ENCODE measurements at regions of chr16 and their contacts with region 1.

Region 1: DNA sequence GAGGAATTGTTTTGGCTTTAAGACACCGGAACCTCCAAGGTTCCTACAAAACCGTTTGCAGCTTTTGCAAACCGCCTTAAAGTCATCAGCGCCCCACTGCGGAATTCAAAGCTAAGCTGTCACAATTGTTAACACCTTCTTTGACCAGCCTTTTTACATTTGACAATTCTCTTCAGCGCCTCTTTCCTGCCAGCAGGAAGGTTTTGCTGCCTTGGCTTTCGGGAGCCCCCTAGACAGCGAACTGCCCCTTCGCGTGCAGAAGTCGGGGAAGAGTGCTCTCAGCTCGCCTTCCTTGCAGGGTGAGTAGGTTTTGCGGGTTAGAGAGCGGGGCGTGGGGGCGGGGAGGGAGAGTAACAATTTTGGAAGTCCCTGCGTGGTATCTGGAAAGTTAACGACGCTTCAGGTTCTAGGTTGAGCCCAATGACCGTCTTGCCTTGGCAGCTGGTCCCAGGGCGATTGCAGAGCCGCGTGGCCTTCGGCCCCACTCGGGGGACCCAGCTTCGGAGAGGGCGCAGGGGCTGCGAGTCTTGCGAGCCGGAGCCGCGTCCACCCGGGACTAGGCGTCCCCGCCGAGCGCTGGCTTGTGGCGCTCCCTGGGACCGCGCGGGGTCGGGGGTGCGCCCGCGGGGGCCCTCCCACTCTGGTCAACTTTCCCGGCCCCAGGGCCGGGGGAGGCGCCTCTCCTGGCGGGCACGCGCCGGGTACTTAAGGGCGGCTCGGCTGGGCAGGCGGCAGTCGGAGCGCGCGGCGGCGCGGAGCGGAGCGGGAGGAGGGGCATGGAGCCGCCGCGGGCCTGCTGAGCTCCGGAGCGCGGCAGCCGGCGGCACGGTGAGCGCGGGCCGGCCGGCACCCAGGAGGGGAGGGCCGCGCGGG is at the start of gene HAS3:
- DNase-seq: peak; percentile 69
- ATAC-seq: peak; percentile 72
- H3K4me3 ChIP-seq: peak within 1 kb of the TSS; percentile 81 to 90
- H3K27ac ChIP-seq: peak within 1 kb of the TSS; percentile 74
- H3K4me1 ChIP-seq: peaks cover 24 to 66% of the 10 kb centered on the region in 2 experiments
- H3K27me3 ChIP-seq: no peaks in the 10 kb centered on the region
- CTCF ChIP-seq: peak; percentile 35 to 88 (median 59); a peak in 5 of 6 replicates
- POLR2A ChIP-seq: no peak
- RAD21 ChIP-seq: peak; percentile 96
- total RNA-seq, gene HAS3: 140 TPM

Region 2: DNA sequence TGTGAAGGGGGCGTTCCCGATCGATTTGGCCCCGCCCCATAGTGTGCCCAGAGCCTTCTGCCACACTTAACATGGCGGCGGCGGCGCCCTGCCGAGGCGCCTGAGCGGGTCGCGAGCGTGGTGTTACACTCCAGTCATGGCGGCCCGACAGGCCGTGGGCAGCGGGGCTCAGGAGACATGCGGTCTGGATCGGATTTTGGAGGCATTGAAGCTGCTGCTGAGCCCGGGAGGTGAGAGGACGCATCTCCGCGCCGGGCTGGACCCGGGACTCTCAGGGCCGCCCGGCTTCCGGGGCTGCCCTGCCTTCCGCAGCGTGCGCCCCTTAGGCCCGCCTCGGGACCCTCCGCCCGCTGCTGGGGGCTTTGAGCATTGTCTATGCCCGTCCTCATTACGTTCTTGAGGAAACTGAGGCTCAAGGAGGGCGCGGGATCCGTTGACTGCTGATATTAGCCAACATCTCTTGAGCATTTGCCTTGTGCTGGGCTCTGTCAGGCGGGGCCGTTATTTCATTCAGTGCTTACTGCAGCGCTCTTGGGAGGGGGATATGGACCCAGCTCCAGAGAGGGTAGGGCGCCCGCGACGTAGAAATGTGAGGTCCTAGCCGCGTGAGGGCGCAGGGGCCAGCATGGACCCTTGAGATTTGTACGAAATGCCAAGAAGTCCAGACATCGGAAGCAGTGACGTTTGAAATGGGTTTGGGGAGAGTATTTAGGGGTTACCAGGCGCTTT is 262.1 kb before region 1 on chr16 and contains the start of gene TANGO6:
- CTCF ChIA-PET with region 1: interaction called, 14 read pairs
- POLR2A ChIA-PET with region 1: no interaction called
- RAD21 ChIA-PET with region 1: no interaction called
- intact Hi-C with region 1: loop called (anchors 5 kb)
- DNase-seq: peak; percentile 47
- ATAC-seq: peak; percentile 87
- H3K4me3 ChIP-seq: peak within 1 kb of the TSS; percentile 88 to 97
- H3K27ac ChIP-seq: peak within 1 kb of the TSS; percentile 67
- H3K4me1 ChIP-seq: peaks cover 2 to 12% of the 10 kb centered on the region in 2 experiments; a peak in 3 of 4 replicates
- H3K27me3 ChIP-seq: no peaks in the 10 kb centered on the region
- CTCF ChIP-seq: peak; percentile 18 to 39 (median 35); a peak in 4 of 6 replicates
- POLR2A ChIP-seq: peak; percentile 94
- RAD21 ChIP-seq: peak; percentile 38; the same call in 1 of the 2 replicates
- total RNA-seq, gene TANGO6: 16.4 TPM

Region 3: DNA sequence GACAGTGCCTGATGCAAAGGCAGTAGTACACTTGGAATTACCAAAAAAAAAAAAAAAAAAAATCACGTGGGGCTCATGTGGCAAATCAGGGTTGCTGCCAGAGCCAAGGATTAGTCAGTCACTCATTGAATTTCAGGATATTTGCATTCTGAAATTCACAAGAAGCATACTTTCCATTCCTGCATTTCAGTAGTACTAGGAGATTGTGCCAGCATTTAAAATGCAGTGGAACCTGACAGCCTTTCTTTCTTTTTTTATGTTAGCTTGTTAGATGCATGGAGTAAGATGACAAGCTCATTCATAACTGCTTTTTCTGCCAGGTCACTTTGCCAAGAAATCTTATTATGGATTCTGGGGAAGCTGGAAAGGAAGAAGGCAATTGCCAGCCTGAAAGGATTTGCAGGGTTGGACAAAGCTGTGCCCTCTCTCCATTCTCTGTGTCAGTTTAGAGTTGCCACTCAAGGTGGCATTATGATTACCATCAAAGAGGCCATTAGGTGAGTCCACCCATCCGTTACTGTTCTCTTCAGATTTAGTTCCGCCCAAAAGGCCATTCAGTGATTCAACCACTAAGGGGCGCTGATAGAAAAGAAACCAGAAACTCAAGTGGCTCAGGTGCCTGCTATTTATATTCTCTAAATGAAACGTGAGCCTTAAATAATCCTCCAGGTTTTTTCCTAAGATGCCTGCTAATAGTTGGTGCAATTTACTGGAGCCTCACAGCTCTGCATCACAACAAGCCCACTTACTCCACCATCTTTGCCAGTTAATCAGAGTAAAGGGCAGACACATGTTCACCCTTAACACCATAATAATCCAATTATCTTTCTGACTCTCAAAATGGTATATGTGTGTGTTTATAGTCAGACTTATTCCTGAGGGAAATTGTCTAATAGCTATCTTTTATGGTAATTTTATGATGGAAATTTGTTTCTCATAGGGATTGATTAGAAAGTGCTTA is 203.4 kb before region 1 on chr16:
- CTCF ChIA-PET with region 1: interaction called, 9 read pairs
- POLR2A ChIA-PET with region 1: interaction called, 4 read pairs
- RAD21 ChIA-PET with region 1: interaction called in 1 of 2 experiments, 5 read pairs
- intact Hi-C with region 1: loop called (anchors 1 kb)
- DNase-seq: peak; percentile 72
- ATAC-seq: peak; percentile 90
- H3K4me3 ChIP-seq: no peak overlapping the region
- H3K27ac ChIP-seq: no peak overlapping the region
- H3K4me1 ChIP-seq: peaks cover 0 to 13% of the 10 kb centered on the region in 2 experiments; a peak in 2 of 4 replicates
- H3K27me3 ChIP-seq: no peaks in the 10 kb centered on the region
- CTCF ChIP-seq: peak; percentile 85 to 92 (median 90)
- POLR2A ChIP-seq: no peak
- RAD21 ChIP-seq: peak; percentile 98

Region 4: DNA sequence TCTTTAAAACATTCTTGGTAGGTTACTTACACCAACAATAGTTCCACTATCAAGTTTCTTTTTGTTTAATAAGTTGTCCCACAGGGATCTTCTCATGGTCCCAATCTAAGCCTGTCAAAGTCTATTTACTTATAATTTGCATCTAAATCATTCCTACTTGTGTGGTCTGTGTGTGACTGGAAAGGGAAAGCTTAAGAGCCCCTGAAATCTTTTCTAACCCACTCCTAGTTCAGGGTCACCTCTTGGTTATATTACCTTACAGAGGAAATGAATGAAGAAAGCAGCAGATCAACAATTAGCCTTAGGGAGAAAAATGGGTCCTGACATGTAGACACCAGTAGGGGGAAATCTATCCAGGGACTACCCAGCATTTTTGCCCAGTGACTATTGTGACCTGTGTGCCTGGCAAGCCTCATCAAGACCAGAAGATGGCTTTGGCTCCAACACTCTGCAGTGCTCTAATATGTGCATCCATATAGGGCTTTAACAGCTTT is 110.7 kb before region 1 on chr16:
- CTCF ChIA-PET with region 1: interaction called, 5 read pairs
- POLR2A ChIA-PET with region 1: interaction called, 3 read pairs
- RAD21 ChIA-PET with region 1: no interaction called
- intact Hi-C with region 1: loop called (anchors 2 kb)
- DNase-seq: peak; percentile 80
- ATAC-seq: peak; percentile 87
- H3K4me3 ChIP-seq: no peak overlapping the region
- H3K27ac ChIP-seq: peak overlapping the region; percentile 68
- H3K4me1 ChIP-seq: peaks cover 43 to 86% of the 10 kb centered on the region in 2 experiments
- H3K27me3 ChIP-seq: no peaks in the 10 kb centered on the region
- CTCF ChIP-seq: peak; percentile 75 to 86 (median 78)
- POLR2A ChIP-seq: no peak
- RAD21 ChIP-seq: peak; percentile 91

Region 5: GRCh38 chr16:69073161-69073669 is 32.5 kb before region 1 on chr16:
- CTCF ChIA-PET with region 1: interaction called, 4 read pairs
- POLR2A ChIA-PET with region 1: interaction called, 21 read pairs
- RAD21 ChIA-PET with region 1: no interaction called
- intact Hi-C with region 1: no loop called
- DNase-seq: peak; percentile 93
- ATAC-seq: peak; percentile 71
- H3K4me3 ChIP-seq: peak overlapping the region in 1 of 2 experiments; percentile 22; a peak in 3 of 4 replicates
- H3K27ac ChIP-seq: peak overlapping the region; percentile 79
- H3K4me1 ChIP-seq: peaks cover 81 to 99% of the 10 kb centered on the region in 2 experiments
- H3K27me3 ChIP-seq: no peaks in the 10 kb centered on the region
- CTCF ChIP-seq: 0 out of 6 replicates have a peak, but pooled peaks of 1 of the 3 experiments have one; percentile 4
- POLR2A ChIP-seq: no peak
- RAD21 ChIP-seq: peak; percentile 50